GM12878 (cell line): ENCODE measurements at regions of chr12 and their contacts with region 1.

Region 1: GRCh38 chr12:12696562-12697383 is 790 bp upstream of the GPR19 start:
- DNase-seq: peak; percentile 91
- ATAC-seq: peak; percentile 78
- H3K4me3 ChIP-seq: peak overlapping the region; percentile 77
- H3K27ac ChIP-seq: peak overlapping the region; percentile 99
- H3K4me1 ChIP-seq: peaks cover 35% of the 10 kb centered on the region
- H3K27me3 ChIP-seq: no peaks in the 10 kb centered on the region
- CTCF ChIP-seq: no peak
- EP300 ChIP-seq: peak; percentile 39 to 63; a peak in 2 of 4 replicates
- POLR2A ChIP-seq: peak; percentile 72
- RAD21 ChIP-seq: no peak

Region 2: GRCh38 chr12:12376646-12377448 is 319.9 kb before region 1 on chr12:
- CTCF ChIA-PET with region 1: interaction called, 10 read pairs
- POLR2A ChIA-PET with region 1: no interaction called
- RAD21 ChIA-PET with region 1: interaction called, 8 read pairs
- SMC1A ChIA-PET with region 1: interaction called, 25 read pairs
- in situ Hi-C with region 1: no loop called
- intact Hi-C with region 1: no loop called
- DNase-seq: peak; percentile 55
- ATAC-seq: peak; percentile 76
- H3K4me3 ChIP-seq: no peak overlapping the region
- H3K27ac ChIP-seq: no peak overlapping the region; the same call in 1 of the 2 replicates
- H3K4me1 ChIP-seq: peaks cover 6% of the 10 kb centered on the region
- H3K27me3 ChIP-seq: no peaks in the 10 kb centered on the region
- CTCF ChIP-seq: peak; percentile 41 to 81 (median 58); a peak in 5 of 6 replicates
- EP300 ChIP-seq: no peak
- POLR2A ChIP-seq: no peak
- RAD21 ChIP-seq: peak; percentile 98

Region 3: GRCh38 chr12:12654691-12655460 is 41.9 kb before region 1 on chr12:
- CTCF ChIA-PET with region 1: interaction called, 19 read pairs
- POLR2A ChIA-PET with region 1: interaction called, 4 read pairs
- RAD21 ChIA-PET with region 1: interaction called, 7 read pairs
- SMC1A ChIA-PET with region 1: interaction called, 42 read pairs
- in situ Hi-C with region 1: no loop called
- intact Hi-C with region 1: no loop called
- DNase-seq: no peak
- ATAC-seq: 0 out of 3 replicates have a peak, but pooled peaks have one; percentile 8
- H3K4me3 ChIP-seq: no peak overlapping the region
- H3K27ac ChIP-seq: no peak overlapping the region
- H3K4me1 ChIP-seq: no peaks in the 10 kb centered on the region; the same call in 1 of the 2 replicates
- H3K27me3 ChIP-seq: no peaks in the 10 kb centered on the region
- CTCF ChIP-seq: no peak
- EP300 ChIP-seq: no peak
- POLR2A ChIP-seq: no peak
- RAD21 ChIP-seq: no peak

Region 4: DNA sequence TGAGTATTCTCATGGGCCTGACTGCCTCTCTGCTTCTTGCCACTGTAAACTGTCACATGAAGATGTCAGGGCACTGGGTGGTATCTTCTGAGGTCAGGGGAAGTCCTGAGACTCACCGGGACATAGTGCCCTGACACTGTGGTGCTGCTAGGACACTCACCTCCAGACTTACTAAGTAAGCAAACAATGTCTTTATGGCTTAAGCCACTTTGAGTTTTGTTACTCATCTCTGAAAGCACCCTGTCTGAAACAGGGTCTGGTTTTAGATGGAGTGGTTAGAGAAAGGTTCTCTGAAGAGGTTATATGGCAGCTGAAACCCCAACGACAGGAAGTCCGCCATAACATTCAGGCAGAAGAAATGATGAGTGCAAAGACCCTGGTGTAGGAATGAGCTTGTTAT is 23.5 kb before region 1 on chr12:
- CTCF ChIA-PET with region 1: no interaction called
- POLR2A ChIA-PET with region 1: interaction called, 5 read pairs
- RAD21 ChIA-PET with region 1: interaction called, 3 read pairs
- SMC1A ChIA-PET with region 1: interaction called, 29 read pairs
- in situ Hi-C with region 1: no loop called
- intact Hi-C with region 1: loop called (anchors 2 kb)
- DNase-seq: peak; percentile 65
- ATAC-seq: peak; percentile 96
- H3K4me3 ChIP-seq: no peak overlapping the region
- H3K27ac ChIP-seq: peak overlapping the region; percentile 48
- H3K4me1 ChIP-seq: peaks cover 16% of the 10 kb centered on the region; the same call in 1 of the 2 replicates
- H3K27me3 ChIP-seq: no peaks in the 10 kb centered on the region
- CTCF ChIP-seq: no peak
- EP300 ChIP-seq: peak in 1 of 2 experiments; percentile 10; a peak in 1 of 4 replicates
- POLR2A ChIP-seq: no peak
- RAD21 ChIP-seq: no peak

Region 5: GRCh38 chr12:12724661-12725545 is 28.1 kb after region 1 on chr12:
- CTCF ChIA-PET with region 1: interaction called, 6 read pairs
- POLR2A ChIA-PET with region 1: interaction called, 6 read pairs
- RAD21 ChIA-PET with region 1: interaction called, 7 read pairs
- SMC1A ChIA-PET with region 1: interaction called, 18 read pairs
- in situ Hi-C with region 1: no loop called
- intact Hi-C with region 1: loop called (anchors 2 kb)
- DNase-seq: peak; percentile 94
- ATAC-seq: peak; percentile 55
- H3K4me3 ChIP-seq: peak overlapping the region; percentile 97
- H3K27ac ChIP-seq: peak overlapping the region; percentile 97
- H3K4me1 ChIP-seq: peaks cover 14% of the 10 kb centered on the region
- H3K27me3 ChIP-seq: no peaks in the 10 kb centered on the region
- CTCF ChIP-seq: no peak
- EP300 ChIP-seq: no peak
- POLR2A ChIP-seq: peak; percentile 76
- RAD21 ChIP-seq: no peak

Region 6: DNA sequence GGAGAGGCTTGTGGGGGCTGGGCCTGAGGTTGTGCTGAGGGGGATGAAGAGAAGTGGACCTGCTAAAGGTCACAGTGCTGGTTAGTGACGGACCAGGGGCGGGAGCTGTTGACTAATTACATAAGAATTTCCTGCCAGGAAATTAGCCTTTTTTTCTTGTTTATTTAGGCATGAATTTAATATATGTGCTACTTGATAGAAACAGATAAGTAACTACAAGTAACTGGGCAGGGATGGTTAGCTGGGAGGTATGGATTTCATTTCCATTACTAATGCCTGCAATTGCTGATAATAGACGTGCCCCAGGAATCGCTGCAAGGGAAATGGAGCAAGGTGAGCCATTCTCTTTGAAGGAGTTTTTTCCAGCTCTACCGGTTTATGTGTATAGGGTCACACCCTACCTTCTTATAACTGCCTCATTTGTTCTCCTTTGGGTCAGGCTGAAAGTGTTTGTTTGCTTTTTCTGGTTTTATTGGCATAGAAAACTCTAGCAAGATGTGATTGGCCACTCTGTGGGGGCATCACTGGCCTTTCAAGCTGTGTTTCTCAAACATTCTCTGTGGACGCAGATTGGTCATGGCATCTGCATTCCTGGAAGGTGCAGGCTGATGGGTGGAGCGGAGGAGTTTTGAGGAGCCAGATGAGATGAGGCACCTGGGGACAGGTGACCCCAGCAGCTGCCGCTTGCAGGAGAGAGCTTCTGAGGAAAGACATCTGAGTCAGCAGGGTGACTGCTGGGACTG is 175.5 kb after region 1 on chr12:
- CTCF ChIA-PET with region 1: no interaction called
- POLR2A ChIA-PET with region 1: no interaction called
- RAD21 ChIA-PET with region 1: no interaction called
- SMC1A ChIA-PET with region 1: no interaction called
- in situ Hi-C with region 1: no loop called
- intact Hi-C with region 1: no loop called
- DNase-seq: no peak
- ATAC-seq: no peak
- H3K4me3 ChIP-seq: no peak overlapping the region
- H3K27ac ChIP-seq: no peak overlapping the region
- H3K4me1 ChIP-seq: peaks cover 5% of the 10 kb centered on the region
- H3K27me3 ChIP-seq: no peaks in the 10 kb centered on the region
- CTCF ChIP-seq: no peak
- EP300 ChIP-seq: no peak
- POLR2A ChIP-seq: no peak
- RAD21 ChIP-seq: no peak